Heart right ventricle (tissue), 16 donors: ENCODE measurements at regions of chr17 and their contacts with region 1.

Region 1: GRCh38 chr17:80147035-80147836 is at the start of gene EIF4A3:
- DNase-seq: peak; percentile 98 to 99
- ATAC-seq: peak; percentile 97 to 99 (median 98)
- H3K4me3 ChIP-seq: peak within 1 kb of the TSS; percentile 83 to 99 (median 96)
- H3K27ac ChIP-seq: peak within 1 kb of the TSS; percentile 88 to 98 (median 95)
- H3K4me1 ChIP-seq: peaks cover 0 to 55% (median 20%) of the 10 kb centered on the region in 9 donors
- H3K27me3 ChIP-seq: no peaks in the 10 kb centered on the region
- CTCF ChIP-seq: peak in 3 of 9 donors; percentile 23 to 36 (median 27)
- total RNA-seq, gene EIF4A3: 26.5 to 40.2 (median 34.3) TPM

Region 2: GRCh38 chr17:79991140-79991923 is 155.9 kb before region 1 on chr17:
- intact Hi-C with region 1: no loop called
- DNase-seq: peak; percentile 80 to 83
- ATAC-seq: peak; percentile 79 to 92 (median 88)
- H3K4me3 ChIP-seq: peak overlapping the region; percentile 9 to 56 (median 51)
- H3K27ac ChIP-seq: peak overlapping the region in 7 of 10 donors; percentile 43 to 88 (median 87)
- H3K4me1 ChIP-seq: peaks cover 22 to 56% (median 45%) of the 10 kb centered on the region in 9 donors
- H3K27me3 ChIP-seq: no peaks in the 10 kb centered on the region
- CTCF ChIP-seq: peak; percentile 38 to 76 (median 60)

Region 3: DNA sequence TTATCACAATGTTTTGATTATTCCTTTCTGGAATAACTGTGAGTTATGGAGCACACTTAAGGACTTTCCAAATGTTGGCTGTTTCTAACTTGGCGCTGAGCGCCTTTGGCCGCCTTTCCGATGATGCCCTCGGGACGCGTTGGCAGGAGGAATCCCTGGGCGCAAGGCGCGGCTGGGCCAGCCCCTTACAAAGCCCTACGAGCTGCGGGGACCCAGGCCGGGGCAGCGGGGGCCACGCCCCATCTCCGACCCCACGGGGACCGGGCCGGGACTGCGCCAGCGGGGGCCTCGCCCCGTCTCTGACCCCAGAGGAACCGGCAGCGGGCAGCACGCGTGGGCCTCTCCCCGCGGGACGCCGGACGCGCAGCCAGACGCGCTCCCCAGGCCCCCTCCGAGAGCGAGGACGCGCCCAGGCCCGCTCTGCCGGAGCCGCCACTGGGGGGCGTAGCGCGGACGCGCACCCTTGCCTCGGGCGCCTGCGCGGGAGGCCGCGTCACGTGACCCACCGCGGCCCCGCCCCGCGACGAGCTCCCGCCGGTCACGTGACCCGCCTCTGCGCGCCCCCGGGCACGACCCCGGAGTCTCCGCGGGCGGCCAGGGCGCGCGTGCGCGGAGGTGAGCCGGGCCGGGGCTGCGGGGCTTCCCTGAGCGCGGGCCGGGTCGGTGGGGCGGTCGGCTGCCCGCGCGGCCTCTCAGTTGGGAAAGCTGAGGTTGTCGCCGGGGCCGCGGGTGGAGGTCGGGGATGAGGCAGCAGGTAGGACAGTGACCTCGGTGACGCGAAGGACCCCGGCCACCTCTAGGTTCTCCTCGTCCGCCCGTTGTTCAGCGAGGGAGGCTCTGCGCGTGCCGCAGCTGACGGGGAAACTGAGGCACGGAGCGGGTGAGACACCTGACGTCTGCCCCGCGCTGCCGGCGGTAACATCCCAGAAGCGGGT is 46.0 kb before region 1 on chr17 and contains the start of gene GAA:
- intact Hi-C with region 1: loop called in 3 of 10 experiments (anchors 1 to 5 kb)
- DNase-seq: peak; percentile 81 to 91
- ATAC-seq: peak; percentile 80 to 94 (median 91)
- H3K4me3 ChIP-seq: peak within 1 kb of the TSS; percentile 75 to 97 (median 92)
- H3K27ac ChIP-seq: peak within 1 kb of the TSS; percentile 75 to 97 (median 93)
- H3K4me1 ChIP-seq: peaks cover 0 to 23% (median 14%) of the 10 kb centered on the region in 9 donors
- H3K27me3 ChIP-seq: no peaks in the 10 kb centered on the region
- CTCF ChIP-seq: peak; percentile 72 to 97 (median 86)
- total RNA-seq, gene GAA: 29.6 to 67.7 (median 52.1) TPM

Region 4: GRCh38 chr17:80187515-80187941 is 40.3 kb after region 1 on chr17:
- intact Hi-C with region 1: loop called in 1 of 10 experiments (anchors 5 kb)
- DNase-seq: peak; percentile 72
- ATAC-seq: peak; percentile 75 to 90 (median 86)
- H3K4me3 ChIP-seq: peak overlapping the region in 6 of 10 donors; percentile 22 to 32 (median 29)
- H3K27ac ChIP-seq: peak overlapping the region in 6 of 10 donors; percentile 37 to 71 (median 67)
- H3K4me1 ChIP-seq: peaks cover 5 to 41% (median 23%) of the 10 kb centered on the region in 9 donors
- H3K27me3 ChIP-seq: peaks cover 0 to 27% (median 8%) of the 10 kb centered on the region in 7 donors
- CTCF ChIP-seq: no peak

Region 5: DNA sequence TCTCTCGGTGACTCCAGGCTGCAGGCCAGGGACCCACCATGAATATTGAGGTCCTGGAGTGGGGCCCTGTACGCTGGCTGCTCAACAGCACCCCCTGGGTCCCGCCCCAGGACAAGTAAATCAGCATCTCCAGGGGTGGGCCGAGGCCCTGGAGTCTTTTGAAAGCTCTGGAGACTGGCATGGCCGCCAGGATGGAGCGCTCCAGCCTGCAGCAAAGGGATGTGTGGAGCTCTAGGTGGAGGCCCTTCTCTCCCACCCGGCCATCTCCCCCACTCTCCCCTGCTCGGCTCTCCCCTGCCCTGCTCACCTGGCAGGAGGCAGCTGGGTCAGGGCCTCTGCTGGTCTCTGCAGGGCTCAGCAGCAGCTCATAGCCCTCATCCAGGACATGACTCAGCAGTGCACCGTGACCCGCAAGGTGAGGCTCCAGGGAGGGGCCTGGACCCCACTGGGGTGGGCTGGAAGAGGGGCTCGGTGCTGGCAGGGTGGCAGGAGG is 56.3 kb after region 1 on chr17:
- intact Hi-C with region 1: no loop called
- DNase-seq: no peak
- ATAC-seq: no peak
- H3K4me3 ChIP-seq: no peak overlapping the region
- H3K27ac ChIP-seq: no peak overlapping the region
- H3K4me1 ChIP-seq: peaks cover 0 to 6% (median 0%) of the 10 kb centered on the region in 9 donors
- H3K27me3 ChIP-seq: no peaks in the 10 kb centered on the region
- CTCF ChIP-seq: no peak

Region 6: GRCh38 chr17:80219013-80219762 is 72.0 kb after region 1 on chr17:
- intact Hi-C with region 1: loop called in 2 of 10 experiments (anchors 2 to 5 kb)
- DNase-seq: peak; percentile 64 to 70
- ATAC-seq: peak in 7 of 8 donors; percentile 30 to 69 (median 50)
- H3K4me3 ChIP-seq: peak overlapping the region; percentile 66 to 99 (median 92)
- H3K27ac ChIP-seq: peak overlapping the region in 9 of 10 donors; percentile 72 to 91 (median 81)
- H3K4me1 ChIP-seq: peaks cover 6 to 30% (median 19%) of the 10 kb centered on the region in 9 donors
- H3K27me3 ChIP-seq: peaks cover 0 to 9% (median 0%) of the 10 kb centered on the region in 7 donors
- CTCF ChIP-seq: no peak

Region 7: DNA sequence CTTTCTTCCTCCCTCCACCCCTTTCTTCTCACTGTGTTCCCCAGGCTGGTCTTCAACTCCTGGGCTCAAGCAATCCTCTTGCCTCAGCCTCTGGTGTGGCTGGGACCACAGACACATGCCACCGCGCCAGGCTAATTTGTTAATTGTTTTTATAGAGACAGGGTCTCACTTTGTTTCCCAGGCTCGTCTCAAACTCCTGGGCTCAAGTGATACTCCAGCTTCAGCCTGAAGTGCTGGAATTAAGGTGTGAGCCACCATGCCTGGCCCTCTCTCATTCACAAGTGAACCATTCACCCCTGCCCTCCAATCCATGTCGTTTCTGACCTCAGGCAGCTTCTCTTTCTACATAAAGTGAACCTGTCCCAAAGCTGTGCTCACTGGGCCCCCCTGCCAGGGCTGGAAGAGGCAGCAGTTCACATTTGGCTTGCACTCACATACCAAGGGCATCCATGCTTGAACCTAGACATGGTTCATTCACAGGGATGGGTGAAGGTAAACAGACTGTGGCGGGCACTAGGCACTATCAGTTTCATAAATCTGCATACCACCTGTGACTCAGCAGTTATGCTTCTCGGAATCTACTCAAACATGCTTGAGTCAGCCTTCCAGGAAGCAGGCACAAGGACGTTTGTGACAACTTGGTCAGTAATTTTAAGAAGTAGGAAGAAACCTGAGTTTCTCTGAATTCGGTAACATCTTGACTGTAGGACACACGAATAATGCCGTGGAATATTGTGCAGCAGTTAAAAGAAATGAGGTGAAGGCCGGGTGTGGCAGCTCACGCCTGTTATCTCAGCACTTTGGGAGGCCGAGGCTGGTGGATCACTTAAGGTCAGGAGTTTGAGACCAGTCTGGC is 107.4 kb after region 1 on chr17:
- intact Hi-C with region 1: loop called in 1 of 10 experiments (anchors 10 kb)
- DNase-seq: no peak
- ATAC-seq: peak in 2 of 8 donors; percentile 10 to 43
- H3K4me3 ChIP-seq: peak overlapping the region in 1 of 10 donors; percentile 6
- H3K27ac ChIP-seq: peak overlapping the region in 3 of 10 donors; percentile 4 to 93 (median 20)
- H3K4me1 ChIP-seq: peaks cover 0 to 38% (median 2%) of the 10 kb centered on the region in 9 donors
- H3K27me3 ChIP-seq: no peaks in the 10 kb centered on the region
- CTCF ChIP-seq: no peak

Region 8: GRCh38 chr17:80263253-80264204 is 116.3 kb after region 1 on chr17:
- intact Hi-C with region 1: loop called in 5 of 10 experiments (anchors 5 to 10 kb)
- DNase-seq: peak; percentile 63 to 92
- ATAC-seq: peak; percentile 44 to 88 (median 74)
- H3K4me3 ChIP-seq: peak overlapping the region; percentile 26 to 100 (median 62)
- H3K27ac ChIP-seq: peak overlapping the region in 9 of 10 donors; percentile 98 to 100 (median 99)
- H3K4me1 ChIP-seq: peaks cover 13 to 69% (median 47%) of the 10 kb centered on the region in 9 donors
- H3K27me3 ChIP-seq: no peaks in the 10 kb centered on the region
- CTCF ChIP-seq: peak in 5 of 9 donors; percentile 4 to 40 (median 27)

Region 9: DNA sequence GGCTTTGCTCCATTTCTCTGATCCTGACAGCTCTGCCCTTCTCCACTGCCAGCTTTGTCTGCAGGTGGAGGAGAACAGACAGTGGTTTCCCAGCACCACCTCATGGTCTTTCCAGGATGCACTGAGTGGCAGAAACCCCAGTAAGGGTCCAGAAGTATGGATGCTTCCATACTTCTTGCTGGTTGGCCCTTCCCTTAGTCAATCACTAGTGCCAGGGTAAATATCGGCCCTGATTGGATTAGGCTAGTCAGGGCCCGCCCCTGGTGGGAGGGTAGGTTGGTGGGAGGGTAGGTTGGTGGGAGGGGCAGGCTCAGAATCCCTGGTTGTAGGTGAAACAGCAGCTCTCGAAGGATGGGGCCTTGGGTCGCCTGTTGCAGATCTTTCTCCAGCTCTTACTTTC is 123.6 kb after region 1 on chr17:
- intact Hi-C with region 1: loop called in 2 of 10 experiments (anchors 10 kb)
- DNase-seq: no peak
- ATAC-seq: peak in 3 of 8 donors; percentile 24 to 42 (median 36)
- H3K4me3 ChIP-seq: no peak overlapping the region
- H3K27ac ChIP-seq: no peak overlapping the region
- H3K4me1 ChIP-seq: peaks cover 0 to 33% (median 0%) of the 10 kb centered on the region in 9 donors
- H3K27me3 ChIP-seq: no peaks in the 10 kb centered on the region
- CTCF ChIP-seq: no peak